Keratinocyte (primary cell): ENCODE measurements at regions of chr4 and their contacts with region 1.

Region 1: GRCh38 chr4:184949020-184949419 is 69.3 kb upstream of the HELT start:
- DNase-seq: no peak
- H3K4me3 ChIP-seq: no peak overlapping the region
- H3K27ac ChIP-seq: no peak overlapping the region
- H3K4me1 ChIP-seq: peaks cover 2% of the 10 kb centered on the region
- H3K27me3 ChIP-seq: peaks cover 5% of the 10 kb centered on the region
- CTCF ChIP-seq: no peak

Region 2: DNA sequence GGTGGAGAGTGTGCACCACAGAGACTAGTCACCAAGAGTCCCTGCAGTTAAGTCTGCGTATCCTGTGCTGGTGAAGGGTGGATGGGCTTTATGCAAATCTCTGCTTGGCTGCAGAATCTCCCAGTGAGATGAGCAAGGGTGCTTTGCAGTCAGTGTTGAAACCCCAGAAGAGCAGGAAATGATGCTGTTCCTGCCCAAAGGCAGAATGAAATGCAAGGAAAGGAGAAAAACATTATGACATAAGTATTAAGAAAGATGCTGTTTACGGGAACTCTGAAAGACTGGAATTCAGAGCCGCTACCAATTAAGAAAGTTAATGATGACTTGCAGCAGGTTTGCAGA is 97.8 kb before region 1 on chr4:
- dilution Hi-C with region 1: no loop called
- DNase-seq: no peak
- H3K4me3 ChIP-seq: no peak overlapping the region
- H3K27ac ChIP-seq: no peak overlapping the region
- H3K4me1 ChIP-seq: no peaks in the 10 kb centered on the region
- H3K27me3 ChIP-seq: no peaks in the 10 kb centered on the region
- CTCF ChIP-seq: no peak

Region 3: DNA sequence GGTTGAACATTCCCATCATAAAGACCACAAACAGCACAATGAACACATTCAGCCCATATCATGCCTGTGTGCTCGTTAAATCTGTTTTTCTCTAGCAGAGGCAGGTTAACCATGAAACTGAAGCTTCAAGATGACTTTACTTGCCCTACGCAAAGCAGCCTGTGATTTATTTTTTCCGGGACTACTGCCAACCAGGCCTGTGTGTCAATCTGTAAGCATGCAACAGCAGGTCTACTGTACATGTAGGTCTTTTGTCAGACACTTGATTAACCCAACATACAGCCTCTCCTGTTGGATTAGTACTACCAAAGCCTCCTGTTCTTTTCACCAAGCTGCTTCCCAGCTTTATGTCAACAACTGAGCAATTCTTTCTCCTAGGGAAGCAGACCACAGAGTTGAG is 37.7 kb before region 1 on chr4:
- dilution Hi-C with region 1: loop called (anchors 5 kb)
- DNase-seq: peak; percentile 78
- H3K4me3 ChIP-seq: no peak overlapping the region
- H3K27ac ChIP-seq: no peak overlapping the region
- H3K4me1 ChIP-seq: peaks cover 11% of the 10 kb centered on the region
- H3K27me3 ChIP-seq: peaks cover 3% of the 10 kb centered on the region
- CTCF ChIP-seq: no peak